Body of pancreas (tissue), 4 donors: ENCODE measurements at regions of chr11 and their contacts with region 1.

Region 1: DNA sequence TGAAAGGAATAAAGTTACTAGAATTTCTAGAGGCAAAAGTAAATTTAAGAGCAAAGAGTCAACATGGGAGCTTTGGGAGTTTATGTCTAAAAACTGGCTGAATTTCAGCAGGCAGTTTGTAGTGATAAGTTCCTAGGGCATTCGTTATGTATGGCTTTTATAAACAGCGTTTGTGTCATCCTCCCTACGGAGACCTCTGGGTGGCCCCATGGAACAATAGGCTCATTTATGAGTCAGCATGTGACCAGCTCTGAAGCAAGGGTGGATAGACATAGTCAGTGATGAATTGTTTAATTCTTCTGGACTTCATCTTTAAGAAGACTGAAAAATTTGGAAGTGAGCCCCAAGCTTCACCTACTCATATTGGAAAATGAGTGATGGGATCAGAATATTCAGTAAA is 37.1 kb downstream of the SVIP start:
- DNase-seq: no peak
- ATAC-seq: no peak
- H3K4me3 ChIP-seq: no peak overlapping the region
- H3K27ac ChIP-seq: no peak overlapping the region
- H3K4me1 ChIP-seq: peaks cover 3% of the 10 kb centered on the region
- H3K27me3 ChIP-seq: no peaks in the 10 kb centered on the region
- CTCF ChIP-seq: no peak
- POLR2A ChIP-seq: no peak

Region 2: GRCh38 chr11:22031791-22032190 is 760.7 kb before region 1 on chr11:
- intact Hi-C with region 1: no loop called
- DNase-seq: no peak
- ATAC-seq: no peak
- H3K4me3 ChIP-seq: no peak overlapping the region
- H3K27ac ChIP-seq: no peak overlapping the region
- H3K4me1 ChIP-seq: no peaks in the 10 kb centered on the region
- H3K27me3 ChIP-seq: no peaks in the 10 kb centered on the region
- CTCF ChIP-seq: no peak
- POLR2A ChIP-seq: no peak

Region 3: GRCh38 chr11:22331771-22332170 is 460.7 kb before region 1 on chr11:
- intact Hi-C with region 1: loop called (anchors 5 kb)
- DNase-seq: no peak
- ATAC-seq: no peak
- H3K4me3 ChIP-seq: no peak overlapping the region
- H3K27ac ChIP-seq: no peak overlapping the region
- H3K4me1 ChIP-seq: no peaks in the 10 kb centered on the region
- H3K27me3 ChIP-seq: no peaks in the 10 kb centered on the region
- CTCF ChIP-seq: peak in 1 of 7 experiments; percentile 8
- POLR2A ChIP-seq: no peak